Heart right ventricle (tissue), 16 donors: ENCODE measurements at regions of chr4 and their contacts with region 1.

Region 1: DNA sequence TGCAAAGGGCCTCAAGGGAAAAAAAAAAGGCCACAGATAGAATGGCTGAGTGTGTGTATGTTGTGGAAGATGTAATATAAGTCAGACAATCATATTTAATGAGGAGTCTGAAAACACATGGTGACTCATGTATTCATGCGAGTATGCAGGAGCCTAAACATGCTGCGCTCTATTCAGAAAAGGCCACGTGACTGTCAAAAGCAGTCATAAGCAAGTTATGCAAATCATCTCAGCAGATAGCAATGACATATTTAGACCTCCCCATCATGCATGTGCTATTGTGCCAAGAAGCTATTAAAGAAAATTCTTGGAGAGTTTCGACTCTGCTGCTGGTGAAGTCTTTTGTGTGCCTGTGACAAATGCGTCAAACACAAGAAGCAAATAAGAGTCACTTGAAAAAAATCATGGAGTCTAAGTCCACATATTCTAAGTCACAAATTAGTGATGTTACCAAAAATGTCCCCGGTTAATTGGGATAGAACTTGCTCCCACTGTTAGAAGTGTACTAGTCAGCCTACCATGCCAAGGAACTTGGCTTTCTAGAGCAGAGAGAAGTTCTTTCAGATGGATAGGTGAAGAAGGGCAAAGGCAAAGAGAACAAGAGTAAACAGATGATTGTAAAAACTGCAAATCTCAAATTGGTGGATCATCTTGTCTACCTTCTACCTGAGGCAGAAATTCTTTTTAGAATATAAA is 5.0 kb downstream of the LNX1 start:
- DNase-seq: peak in 1 of 2 donors; percentile 17
- ATAC-seq: peak; percentile 55 to 98 (median 92)
- H3K4me3 ChIP-seq: no peak overlapping the region
- H3K27ac ChIP-seq: peak overlapping the region in 4 of 10 donors; percentile 19 to 27 (median 24)
- H3K4me1 ChIP-seq: peaks cover 0 to 15% (median under 1%) of the 10 kb centered on the region in 9 donors
- H3K27me3 ChIP-seq: no peaks in the 10 kb centered on the region
- CTCF ChIP-seq: no peak

Region 2: DNA sequence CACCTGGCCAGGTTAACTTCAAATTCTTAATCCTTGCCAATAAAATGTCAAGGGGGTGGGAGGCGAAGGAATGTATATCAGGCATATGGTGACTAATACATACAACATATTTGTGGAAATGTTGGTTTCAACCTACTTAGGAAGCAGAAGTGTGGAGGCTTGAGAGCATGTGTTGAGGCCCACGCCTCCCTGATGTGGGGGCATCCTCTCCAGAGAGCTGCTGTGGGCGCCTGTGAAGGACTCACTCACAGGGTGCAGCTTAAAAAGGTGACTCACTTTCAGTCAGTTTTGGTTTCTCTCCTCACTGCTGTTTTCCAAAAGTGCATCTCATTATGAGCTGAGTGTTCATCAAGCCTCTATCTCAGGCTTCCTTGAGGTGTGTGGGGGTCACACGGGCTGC is 22.4 kb before region 1 on chr4:
- intact Hi-C with region 1: loop called in 1 of 10 experiments (anchors 1 kb)
- DNase-seq: no peak
- ATAC-seq: no peak
- H3K4me3 ChIP-seq: no peak overlapping the region
- H3K27ac ChIP-seq: no peak overlapping the region
- H3K4me1 ChIP-seq: peaks cover 0 to 7% (median 4%) of the 10 kb centered on the region in 9 donors
- H3K27me3 ChIP-seq: no peaks in the 10 kb centered on the region
- CTCF ChIP-seq: no peak

Region 3: DNA sequence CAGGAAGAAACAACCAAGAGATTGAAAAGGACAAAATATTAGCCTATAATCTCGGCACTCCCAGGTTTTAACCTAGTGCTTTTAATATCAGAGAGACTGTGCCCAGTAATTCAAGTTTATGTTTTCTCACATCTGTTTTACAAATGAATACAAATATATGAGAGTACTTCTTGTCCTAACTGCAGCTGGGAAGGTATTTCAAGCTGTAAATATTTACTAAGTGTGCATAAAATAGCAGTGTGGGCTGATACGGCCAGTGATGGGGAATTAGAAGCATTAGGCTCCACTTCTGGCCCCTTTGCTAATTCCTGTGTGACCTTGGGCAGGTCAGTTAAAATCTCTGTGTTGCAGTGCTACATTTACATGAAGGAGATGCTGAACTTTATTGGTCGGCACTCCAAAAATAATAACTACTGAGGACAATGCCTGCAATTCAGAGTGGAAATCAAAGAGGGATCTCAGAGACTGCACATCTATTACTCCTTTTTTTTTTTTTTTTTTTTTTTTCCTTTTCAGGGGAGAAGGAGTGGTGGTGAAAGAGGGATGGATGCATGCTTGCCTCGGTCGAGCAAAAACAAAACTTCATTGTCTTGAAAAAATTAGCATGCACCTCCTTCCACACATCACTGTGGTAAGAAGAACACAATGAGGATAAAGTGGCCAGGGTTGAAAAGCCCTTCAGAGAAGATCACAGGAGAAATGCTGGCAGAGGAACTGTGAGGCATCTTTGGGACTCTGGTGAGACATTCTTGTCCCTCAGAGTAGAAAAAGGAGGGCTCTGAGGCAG is 49.6 kb after region 1 on chr4:
- intact Hi-C with region 1: loop called in 1 of 10 experiments (anchors 5 kb)
- DNase-seq: no peak
- ATAC-seq: no peak
- H3K4me3 ChIP-seq: no peak overlapping the region
- H3K27ac ChIP-seq: no peak overlapping the region
- H3K4me1 ChIP-seq: peaks cover 0 to 26% (median 12%) of the 10 kb centered on the region in 9 donors
- H3K27me3 ChIP-seq: no peaks in the 10 kb centered on the region
- CTCF ChIP-seq: no peak